ENCODE measurements at regions of chr12 and their contacts with region 1.

Region 1: GRCh38 chr12:93378373-93379325 is 924 bp downstream of the NUDT4 start:
- DNase-seq: peak; percentile 51
- ATAC-seq: peak; percentile 4
- H3K4me3 ChIP-seq: peak overlapping the region; percentile 97
- H3K27ac ChIP-seq: peak overlapping the region; percentile 15; the same call in 1 of the 2 replicates
- H3K4me1 ChIP-seq: peaks cover 30% of the 10 kb centered on the region
- H3K27me3 ChIP-seq: no peaks in the 10 kb centered on the region
- CTCF ChIP-seq: no peak

Region 2: GRCh38 chr12:92987362-92987761 is 391.3 kb before region 1 on chr12:
- CTCF ChIA-PET with region 1: interaction called, 10 read pairs
- POLR2A ChIA-PET with region 1: interaction called, 3 read pairs
- intact Hi-C with region 1: loop called (anchors 1 kb)
- DNase-seq: peak; percentile 87
- ATAC-seq: peak; percentile 77
- H3K4me3 ChIP-seq: no peak overlapping the region
- H3K27ac ChIP-seq: no peak overlapping the region
- H3K4me1 ChIP-seq: peaks cover 7% of the 10 kb centered on the region
- H3K27me3 ChIP-seq: no peaks in the 10 kb centered on the region
- CTCF ChIP-seq: peak; percentile 79

Region 3: GRCh38 chr12:93094988-93095737 is 283.5 kb before region 1 on chr12:
- CTCF ChIA-PET with region 1: no interaction called
- POLR2A ChIA-PET with region 1: no interaction called
- intact Hi-C with region 1: loop called (anchors 5 kb)
- DNase-seq: no peak
- ATAC-seq: no peak
- H3K4me3 ChIP-seq: no peak overlapping the region
- H3K27ac ChIP-seq: no peak overlapping the region
- H3K4me1 ChIP-seq: peaks cover 28% of the 10 kb centered on the region
- H3K27me3 ChIP-seq: no peaks in the 10 kb centered on the region
- CTCF ChIP-seq: no peak

Region 4: GRCh38 chr12:93167841-93168492 is 210.7 kb before region 1 on chr12:
- CTCF ChIA-PET with region 1: no interaction called
- POLR2A ChIA-PET with region 1: no interaction called
- intact Hi-C with region 1: loop called (anchors 2 kb)
- DNase-seq: peak; percentile 43
- ATAC-seq: peak; percentile 38
- H3K4me3 ChIP-seq: peak overlapping the region; percentile 84
- H3K27ac ChIP-seq: no peak overlapping the region
- H3K4me1 ChIP-seq: peaks cover 23% of the 10 kb centered on the region
- H3K27me3 ChIP-seq: no peaks in the 10 kb centered on the region
- CTCF ChIP-seq: no peak

Region 5: GRCh38 chr12:93242154-93242972 is 136.3 kb before region 1 on chr12:
- CTCF ChIA-PET with region 1: no interaction called
- POLR2A ChIA-PET with region 1: interaction called, 15 read pairs
- intact Hi-C with region 1: no loop called
- DNase-seq: no peak
- ATAC-seq: no peak
- H3K4me3 ChIP-seq: no peak overlapping the region
- H3K27ac ChIP-seq: no peak overlapping the region
- H3K4me1 ChIP-seq: no peaks in the 10 kb centered on the region
- H3K27me3 ChIP-seq: no peaks in the 10 kb centered on the region
- CTCF ChIP-seq: no peak

Region 6: DNA sequence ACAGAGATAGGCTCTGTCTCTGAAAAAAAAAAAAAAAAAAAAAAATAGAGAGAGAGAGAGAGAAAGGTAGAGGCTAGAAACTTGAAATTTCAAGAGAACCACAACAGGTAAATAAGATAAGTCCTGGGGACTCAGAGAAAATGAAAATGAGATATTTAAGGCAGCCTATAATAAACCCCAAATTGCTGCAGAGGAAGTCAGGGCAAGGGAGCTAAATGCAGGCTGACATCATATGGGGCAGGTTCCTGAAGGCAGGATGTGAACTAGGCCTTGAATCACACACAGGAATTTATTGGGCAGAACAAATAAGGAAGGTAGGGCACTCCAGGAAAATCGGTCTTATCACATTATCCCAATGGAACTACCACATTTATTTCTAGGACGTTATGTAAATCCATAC is 55.9 kb before region 1 on chr12:
- CTCF ChIA-PET with region 1: no interaction called
- POLR2A ChIA-PET with region 1: no interaction called
- intact Hi-C with region 1: loop called (anchors 5 kb)
- DNase-seq: peak; percentile 80
- ATAC-seq: peak; percentile 94
- H3K4me3 ChIP-seq: no peak overlapping the region
- H3K27ac ChIP-seq: no peak overlapping the region; the same call in 1 of the 2 replicates
- H3K4me1 ChIP-seq: peaks cover 24% of the 10 kb centered on the region
- H3K27me3 ChIP-seq: no peaks in the 10 kb centered on the region
- CTCF ChIP-seq: no peak